Motor neuron (in vitro differentiated cells): ENCODE measurements at regions of chr16 and their contacts with region 1.

Region 1: GRCh38 chr16:5615868-5616642 is 518.5 kb upstream of the EEF2KMT start:
- ATAC-seq: peak; percentile 33 to 100 (median 99)
- H3K4me3 ChIP-seq: peak overlapping the region in 1 of 5 donors; percentile 15
- H3K27ac ChIP-seq: no peak overlapping the region
- H3K4me1 ChIP-seq: peaks cover 3 to 17% of the 10 kb centered on the region in 2 donors

Region 2: DNA sequence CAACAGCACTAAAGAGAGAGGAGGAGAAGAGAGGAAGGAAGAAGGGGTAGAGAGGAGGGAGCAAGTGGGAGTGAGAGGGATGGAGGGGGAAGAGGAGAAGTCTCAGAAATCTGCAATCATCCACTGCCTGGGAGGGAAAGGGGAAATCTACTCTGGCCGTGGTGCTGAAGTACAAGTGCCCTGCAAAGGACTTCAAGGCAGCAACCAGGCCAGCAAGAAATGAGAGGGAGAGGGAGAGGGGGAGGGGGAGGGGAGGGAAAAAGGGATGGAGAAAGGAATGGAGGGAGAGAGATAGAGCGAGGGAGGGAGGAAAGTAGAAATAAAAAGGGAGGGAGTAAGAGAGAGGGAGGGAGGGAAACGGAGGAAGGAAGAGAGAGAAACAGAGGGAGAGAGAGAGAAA is 387.7 kb before region 1 on chr16:
- in situ Hi-C with region 1: loop called in 2 of 9 experiments (anchors 25 kb)
- ATAC-seq: peak in 1 of 8 experiments; percentile 29
- H3K4me3 ChIP-seq: no peak overlapping the region
- H3K27ac ChIP-seq: no peak overlapping the region
- H3K4me1 ChIP-seq: peaks cover 13 to 14% of the 10 kb centered on the region in 2 donors

Region 3: DNA sequence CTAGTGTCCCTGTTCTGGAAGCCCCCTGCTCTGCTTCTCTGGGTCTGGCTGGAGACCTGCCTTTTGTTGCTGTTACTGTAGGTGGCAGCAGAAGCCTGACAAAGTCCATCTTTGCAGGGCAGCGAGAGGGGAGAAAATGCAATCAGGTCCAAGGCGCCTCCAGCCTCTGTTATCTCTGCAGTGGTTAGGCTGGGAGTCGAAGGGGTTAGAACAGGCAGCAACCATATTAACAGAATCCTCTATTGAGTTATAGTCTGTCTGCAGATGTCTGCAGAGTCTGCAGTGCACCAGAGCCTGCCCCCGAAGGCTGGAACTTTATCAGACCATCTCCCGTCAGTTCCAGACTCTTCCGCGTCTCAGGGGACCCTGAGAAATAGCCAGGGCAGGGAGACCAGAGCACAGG is 113.6 kb before region 1 on chr16:
- in situ Hi-C with region 1: loop called in 2 of 9 experiments (anchors 10 to 25 kb)
- ATAC-seq: peak in 6 of 8 experiments; percentile 15 to 94 (median 89)
- H3K4me3 ChIP-seq: no peak overlapping the region
- H3K27ac ChIP-seq: peak overlapping the region in 1 of 2 donors; percentile 23
- H3K4me1 ChIP-seq: peaks cover 13 to 36% of the 10 kb centered on the region in 2 donors